OCI-LY7 (cell line): ENCODE measurements at regions of chr19 and their contacts with region 1.

Region 1: DNA sequence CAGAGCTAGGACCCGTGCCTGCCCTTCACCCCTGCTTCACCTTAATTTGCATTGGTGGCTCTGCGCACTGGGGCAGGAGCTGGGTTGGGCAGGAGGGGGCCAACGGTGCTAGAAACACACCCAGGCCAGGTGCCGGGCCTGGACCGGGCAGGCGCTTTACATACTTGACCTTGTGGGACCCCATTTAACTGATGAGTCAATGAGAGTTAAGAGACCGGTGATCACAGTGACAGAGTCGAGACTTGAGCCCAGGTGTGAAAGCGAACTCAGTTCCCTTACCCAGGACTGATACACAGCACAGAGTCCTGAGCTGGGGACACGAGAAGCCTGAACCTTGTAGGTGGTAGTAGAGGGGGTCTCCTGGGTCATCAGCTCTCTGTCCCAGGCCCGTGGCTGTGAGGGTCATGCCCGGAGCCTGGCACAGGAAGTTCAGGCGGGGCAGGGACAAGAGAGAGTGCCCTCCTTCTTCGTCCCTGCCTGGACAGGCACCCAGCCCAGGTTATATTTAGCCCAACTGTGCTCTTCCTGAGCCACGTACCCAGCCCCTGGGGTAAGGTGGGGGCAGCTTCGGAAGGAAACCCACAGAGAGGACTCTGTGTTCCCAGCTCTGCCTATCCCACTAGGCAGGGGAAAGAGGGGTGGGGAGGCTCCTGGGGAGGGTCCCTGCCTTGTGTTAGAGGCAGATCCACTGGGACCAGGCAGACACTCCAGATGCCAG is 1.9 kb downstream of the PRX start:
- DNase-seq: peak; percentile 65
- H3K4me3 ChIP-seq: no peak overlapping the region
- H3K27ac ChIP-seq: peak overlapping the region; percentile 82
- H3K4me1 ChIP-seq: peaks cover 53% of the 10 kb centered on the region
- CTCF ChIP-seq: no peak

Region 2: GRCh38 chr19:40465557-40466150 is 54.4 kb after region 1 on chr19 and contains the start of gene BLVRB:
- CTCF ChIA-PET with region 1: no interaction called
- POLR2A ChIA-PET with region 1: interaction called, 4 read pairs
- intact Hi-C with region 1: loop called (anchors 5 kb)
- DNase-seq: peak; percentile 99
- H3K4me3 ChIP-seq: peak within 1 kb of the TSS; percentile 78
- H3K27ac ChIP-seq: peak within 1 kb of the TSS; percentile 29
- H3K4me1 ChIP-seq: peaks cover 43% of the 10 kb centered on the region
- CTCF ChIP-seq: no peak
- total RNA-seq, gene BLVRB: 46.0 and 48.5 TPM in 2 replicates

Region 3: DNA sequence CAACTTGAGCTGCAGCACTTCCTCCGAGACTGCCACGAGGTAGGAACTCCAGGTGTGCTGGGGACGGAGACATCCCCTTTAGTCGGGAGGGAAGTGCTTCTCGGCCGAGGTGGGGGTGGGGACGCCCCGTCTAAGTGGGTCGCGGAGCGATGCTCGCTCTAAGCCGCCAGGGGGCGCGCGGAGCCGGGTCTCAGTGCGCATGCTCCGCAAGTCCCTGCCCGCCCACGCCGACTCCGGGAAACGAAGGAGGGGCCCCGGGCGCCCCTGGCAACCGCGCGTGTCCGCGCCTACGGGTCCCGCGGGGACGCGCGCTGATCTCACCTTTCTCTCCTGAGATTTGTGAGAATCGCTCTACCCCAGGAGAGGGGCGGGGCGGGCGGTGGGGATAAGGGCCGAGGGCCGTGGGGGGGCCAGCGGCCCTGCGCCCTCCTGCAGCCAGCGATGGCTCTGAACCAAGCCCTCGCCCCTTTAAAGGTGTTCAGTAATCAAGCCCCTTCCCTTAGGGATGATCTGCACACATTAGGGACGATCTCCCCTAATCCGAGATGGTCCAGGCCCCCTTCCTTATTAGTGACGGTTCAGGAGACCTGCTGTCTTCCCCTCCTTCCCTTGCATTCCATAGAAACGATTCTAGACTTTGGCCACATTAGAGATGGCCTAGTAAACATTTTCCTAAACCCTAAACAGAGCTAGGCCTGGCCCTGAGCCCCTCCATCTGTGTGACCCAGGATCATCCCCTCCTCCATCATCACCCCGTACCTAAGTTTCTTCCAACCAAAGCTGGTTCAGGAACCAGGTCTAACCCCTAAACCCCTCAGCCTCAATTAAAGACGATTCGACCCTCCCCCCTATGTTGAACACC is 118.0 kb after region 1 on chr19:
- CTCF ChIA-PET with region 1: no interaction called
- POLR2A ChIA-PET with region 1: no interaction called
- intact Hi-C with region 1: no loop called
- DNase-seq: peak; percentile 92
- H3K4me3 ChIP-seq: peak overlapping the region; percentile 61
- H3K27ac ChIP-seq: no peak overlapping the region
- H3K4me1 ChIP-seq: peaks cover 19% of the 10 kb centered on the region
- CTCF ChIP-seq: peak; percentile 90